Adrenal gland (tissue), 19 donors: ENCODE measurements at regions of chr6 and their contacts with region 1.

Region 1: DNA sequence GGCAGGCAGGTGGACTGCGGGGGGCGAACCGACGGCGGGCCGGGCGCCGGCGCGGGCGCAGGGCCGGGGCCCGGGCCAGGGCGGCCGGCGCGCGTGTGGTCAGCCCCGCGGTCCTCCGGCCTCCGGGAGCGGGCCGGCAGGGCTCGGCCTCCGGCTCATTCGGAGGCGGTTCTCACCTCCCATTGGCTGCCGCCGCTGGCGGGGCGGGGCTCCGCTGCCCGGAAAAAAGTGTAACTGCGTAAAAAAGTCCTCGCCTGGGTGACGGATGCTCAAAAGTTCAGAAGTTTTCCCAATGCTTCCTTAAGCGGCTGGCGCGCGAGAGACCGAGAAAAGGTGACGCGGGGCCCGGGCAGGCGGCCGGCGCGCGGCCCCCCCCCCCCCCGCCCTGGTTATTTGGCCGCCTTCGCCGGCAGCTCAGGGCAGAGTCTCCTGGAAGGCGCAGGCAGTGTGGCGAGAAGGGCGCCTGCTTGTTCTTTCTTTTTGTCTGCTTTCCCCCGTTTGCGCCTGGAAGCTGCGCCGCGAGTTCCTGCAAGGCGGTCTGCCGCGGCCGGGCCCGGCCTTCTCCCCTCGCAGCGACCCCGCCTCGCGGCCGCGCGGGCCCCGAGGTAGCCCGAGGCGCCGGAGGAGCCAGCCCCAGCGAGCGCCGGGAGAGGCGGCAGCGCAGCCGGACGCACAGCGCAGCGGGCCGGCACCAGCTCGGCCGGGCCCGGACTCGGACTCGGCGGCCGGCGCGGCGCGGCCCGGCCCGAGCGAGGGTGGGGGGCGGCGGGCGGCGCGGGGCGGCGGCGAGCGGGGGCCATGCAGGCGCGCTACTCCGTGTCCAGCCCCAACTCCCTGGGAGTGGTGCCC is at the start of gene FOXC1:
- DNase-seq: peak; percentile 86 to 92 (median 89)
- H3K4me3 ChIP-seq: peak within 1 kb of the TSS in 2 of 4 donors; percentile 45 to 68
- H3K27ac ChIP-seq: peak within 1 kb of the TSS; percentile 30 to 94 (median 89)
- H3K4me1 ChIP-seq: peaks cover 0 to 13% of the 10 kb centered on the region in 2 donors
- H3K27me3 ChIP-seq: peaks cover 53% of the 10 kb centered on the region
- CTCF ChIP-seq: no peak
- POLR2A ChIP-seq: peak; percentile 5 to 75
- total RNA-seq, gene FOXC1: 3.0 to 13.2 (median 5.8) TPM

Region 2: DNA sequence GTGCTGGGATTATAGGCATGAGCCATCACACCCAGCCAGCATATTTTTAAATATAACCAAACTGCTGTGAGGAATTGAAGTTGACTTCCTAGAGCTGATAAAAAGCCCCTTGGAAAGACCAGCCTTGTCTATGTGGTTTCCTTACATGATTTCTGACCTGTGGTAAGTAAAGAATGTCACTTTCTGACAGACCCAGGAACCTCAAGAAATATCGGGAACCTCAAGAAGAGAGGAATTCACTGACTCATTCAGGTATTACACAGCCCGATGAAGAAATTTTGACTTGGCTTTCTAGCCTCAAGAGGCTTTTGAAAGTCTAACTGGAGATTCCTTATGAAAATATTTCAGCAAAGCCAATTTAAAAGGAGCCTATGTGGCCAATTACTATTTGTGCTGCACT is 148.7 kb before region 1 on chr6:
- intact Hi-C with region 1: no loop called
- DNase-seq: no peak
- H3K4me3 ChIP-seq: no peak overlapping the region
- H3K27ac ChIP-seq: no peak overlapping the region
- H3K4me1 ChIP-seq: no peaks in the 10 kb centered on the region
- H3K27me3 ChIP-seq: no peaks in the 10 kb centered on the region
- CTCF ChIP-seq: no peak
- POLR2A ChIP-seq: no peak

Region 3: DNA sequence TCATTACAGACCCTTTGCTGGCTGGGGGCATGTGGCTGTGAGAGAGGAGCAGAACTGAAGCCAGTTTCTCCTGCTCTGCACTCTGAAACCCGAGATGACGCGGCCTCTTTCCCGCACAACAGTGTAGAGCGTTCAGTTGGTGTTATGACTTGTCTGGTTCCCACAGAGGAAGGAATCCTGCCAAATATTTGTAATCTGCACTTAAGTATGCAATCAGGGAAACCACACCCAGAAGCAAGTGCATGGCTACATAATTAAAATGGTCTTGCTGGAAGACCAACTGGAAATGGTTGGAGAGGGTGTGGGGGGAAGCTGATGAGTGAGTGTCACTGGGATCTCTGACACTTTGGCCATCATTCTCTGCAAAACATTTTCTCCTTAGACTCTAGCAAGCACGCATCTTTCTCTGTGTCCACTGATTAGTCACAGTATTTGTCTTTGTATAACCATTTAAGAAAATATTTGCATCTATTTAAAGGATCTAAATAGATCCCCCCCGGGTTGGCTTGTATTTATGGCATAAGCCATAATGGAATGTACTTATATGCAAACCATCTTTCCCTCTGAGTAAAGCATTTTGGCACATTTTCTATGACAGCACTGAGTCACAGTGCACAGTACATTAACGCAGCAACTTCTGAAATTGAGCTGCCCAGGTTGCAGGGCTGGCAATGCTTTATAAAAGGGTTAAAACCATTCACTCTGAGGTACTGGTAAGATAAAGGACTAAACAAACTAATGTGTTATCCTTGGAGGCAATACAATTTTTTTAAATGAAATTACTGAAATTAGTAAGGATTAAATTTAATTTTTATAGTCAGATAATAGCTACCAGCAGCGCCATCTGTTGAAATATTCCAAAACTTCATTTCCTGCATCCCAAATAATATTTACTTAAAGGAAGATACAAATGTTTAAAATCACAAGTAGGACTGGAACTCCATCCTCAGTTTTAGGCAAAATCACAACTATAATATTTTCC is 76.5 kb after region 1 on chr6:
- intact Hi-C with region 1: loop called in 1 of 2 experiments (anchors 10 kb)
- DNase-seq: peak in 1 of 7 donors; percentile 29
- H3K4me3 ChIP-seq: no peak overlapping the region
- H3K27ac ChIP-seq: no peak overlapping the region
- H3K4me1 ChIP-seq: no peaks in the 10 kb centered on the region
- H3K27me3 ChIP-seq: no peaks in the 10 kb centered on the region
- CTCF ChIP-seq: peak in 4 of 6 experiments; percentile 19 to 45 (median 27)
- POLR2A ChIP-seq: no peak

Region 4: GRCh38 chr6:2103644-2104523 is 494.0 kb after region 1 on chr6:
- intact Hi-C with region 1: loop called in 1 of 2 experiments (anchors 5 kb)
- DNase-seq: peak in 1 of 7 donors; percentile 12
- H3K4me3 ChIP-seq: no peak overlapping the region
- H3K27ac ChIP-seq: no peak overlapping the region
- H3K4me1 ChIP-seq: peaks cover 0 to 6% of the 10 kb centered on the region in 2 donors
- H3K27me3 ChIP-seq: no peaks in the 10 kb centered on the region
- CTCF ChIP-seq: peak; percentile 34 to 74 (median 61)
- POLR2A ChIP-seq: no peak

Region 5: GRCh38 chr6:2196079-2196679 is 586.3 kb after region 1 on chr6:
- intact Hi-C with region 1: loop called in 1 of 2 experiments (anchors 10 kb)
- DNase-seq: peak in 5 of 7 donors; percentile 18 to 55 (median 33)
- H3K4me3 ChIP-seq: no peak overlapping the region
- H3K27ac ChIP-seq: no peak overlapping the region
- H3K4me1 ChIP-seq: peaks cover 0 to 9% of the 10 kb centered on the region in 2 donors
- H3K27me3 ChIP-seq: no peaks in the 10 kb centered on the region
- CTCF ChIP-seq: peak; percentile 61 to 77 (median 72)
- POLR2A ChIP-seq: no peak

Region 6: GRCh38 chr6:2353412-2354137 is 743.7 kb after region 1 on chr6:
- intact Hi-C with region 1: loop called in 1 of 2 experiments (anchors 5 kb)
- DNase-seq: peak; percentile 67 to 90 (median 78)
- H3K4me3 ChIP-seq: no peak overlapping the region
- H3K27ac ChIP-seq: peak overlapping the region in 1 of 5 donors; percentile 30
- H3K4me1 ChIP-seq: peaks cover 0 to 9% of the 10 kb centered on the region in 2 donors
- H3K27me3 ChIP-seq: no peaks in the 10 kb centered on the region
- CTCF ChIP-seq: peak; percentile 53 to 90 (median 82)
- POLR2A ChIP-seq: no peak